IMR-90 (cell line): ENCODE measurements at regions of chr6 and their contacts with region 1.

Region 1: GRCh38 chr6:27893059-27893835 is 18.9 kb downstream of the OR2B2 start:
- DNase-seq: peak; percentile 99
- ATAC-seq: peak; percentile 64
- H3K4me3 ChIP-seq: peak overlapping the region; percentile 67
- H3K27ac ChIP-seq: peak overlapping the region; percentile 48
- H3K4me1 ChIP-seq: peaks cover 5% of the 10 kb centered on the region
- H3K27me3 ChIP-seq: no peaks in the 10 kb centered on the region
- CTCF ChIP-seq: no peak
- POLR2A ChIP-seq: peak; percentile 99
- RAD21 ChIP-seq: no peak

Region 2: DNA sequence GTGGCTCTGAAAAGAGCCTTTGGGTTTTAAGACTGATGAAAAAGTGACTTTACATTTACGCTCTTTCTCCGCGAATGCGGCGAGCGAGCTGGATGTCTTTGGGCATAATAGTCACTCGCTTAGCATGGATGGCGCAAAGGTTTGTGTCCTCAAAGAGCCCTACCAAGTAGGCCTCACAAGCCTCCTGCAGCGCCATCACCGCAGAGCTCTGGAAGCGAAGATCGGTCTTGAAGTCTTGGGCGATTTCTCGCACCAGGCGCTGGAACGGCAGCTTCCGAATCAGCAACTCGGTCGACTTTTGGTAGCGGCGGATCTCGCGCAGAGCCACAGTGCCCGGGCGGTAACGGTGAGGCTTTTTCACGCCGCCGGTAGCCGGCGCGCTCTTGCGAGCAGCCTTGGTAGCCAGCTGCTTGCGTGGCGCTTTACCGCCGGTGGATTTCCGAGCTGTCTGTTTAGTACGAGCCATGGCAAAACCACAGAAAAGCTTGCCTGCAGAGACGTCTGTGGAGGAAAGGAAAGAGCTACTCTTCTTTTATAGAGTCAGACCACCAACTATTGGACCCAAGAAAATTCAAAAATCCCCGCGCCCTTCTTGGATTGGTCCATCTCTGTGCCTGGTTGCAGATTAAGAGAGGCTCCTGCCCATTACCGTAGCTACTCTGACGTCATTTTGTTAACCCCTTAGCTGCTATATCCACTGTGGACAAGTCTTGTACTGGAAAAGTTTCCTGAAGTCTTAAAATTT is 1861.5 kb before region 1 on chr6:
- CTCF ChIA-PET with region 1: no interaction called
- POLR2A ChIA-PET with region 1: interaction called, 6 read pairs
- dilution Hi-C with region 1: no loop called
- in situ Hi-C with region 1: no loop called
- intact Hi-C with region 1: loop called (anchors 1 kb)
- DNase-seq: peak; percentile 97
- ATAC-seq: peak; percentile 72
- H3K4me3 ChIP-seq: peak overlapping the region; percentile 73
- H3K27ac ChIP-seq: peak overlapping the region; percentile 27
- H3K4me1 ChIP-seq: no peaks in the 10 kb centered on the region
- H3K27me3 ChIP-seq: no peaks in the 10 kb centered on the region
- CTCF ChIP-seq: peak; percentile 15; the same call in 1 of the 2 replicates
- POLR2A ChIP-seq: peak; percentile 98
- RAD21 ChIP-seq: no peak

Region 3: GRCh38 chr6:27157459-27158315 is 735.6 kb before region 1 on chr6:
- CTCF ChIA-PET with region 1: no interaction called
- POLR2A ChIA-PET with region 1: no interaction called
- dilution Hi-C with region 1: no loop called
- in situ Hi-C with region 1: no loop called
- intact Hi-C with region 1: loop called (anchors 5 kb)
- DNase-seq: peak; percentile 77
- ATAC-seq: peak; percentile 86
- H3K4me3 ChIP-seq: peak overlapping the region; percentile 49
- H3K27ac ChIP-seq: no peak overlapping the region
- H3K4me1 ChIP-seq: no peaks in the 10 kb centered on the region
- H3K27me3 ChIP-seq: no peaks in the 10 kb centered on the region
- CTCF ChIP-seq: peak; percentile 50
- POLR2A ChIP-seq: no peak
- RAD21 ChIP-seq: peak; percentile 38

Region 4: DNA sequence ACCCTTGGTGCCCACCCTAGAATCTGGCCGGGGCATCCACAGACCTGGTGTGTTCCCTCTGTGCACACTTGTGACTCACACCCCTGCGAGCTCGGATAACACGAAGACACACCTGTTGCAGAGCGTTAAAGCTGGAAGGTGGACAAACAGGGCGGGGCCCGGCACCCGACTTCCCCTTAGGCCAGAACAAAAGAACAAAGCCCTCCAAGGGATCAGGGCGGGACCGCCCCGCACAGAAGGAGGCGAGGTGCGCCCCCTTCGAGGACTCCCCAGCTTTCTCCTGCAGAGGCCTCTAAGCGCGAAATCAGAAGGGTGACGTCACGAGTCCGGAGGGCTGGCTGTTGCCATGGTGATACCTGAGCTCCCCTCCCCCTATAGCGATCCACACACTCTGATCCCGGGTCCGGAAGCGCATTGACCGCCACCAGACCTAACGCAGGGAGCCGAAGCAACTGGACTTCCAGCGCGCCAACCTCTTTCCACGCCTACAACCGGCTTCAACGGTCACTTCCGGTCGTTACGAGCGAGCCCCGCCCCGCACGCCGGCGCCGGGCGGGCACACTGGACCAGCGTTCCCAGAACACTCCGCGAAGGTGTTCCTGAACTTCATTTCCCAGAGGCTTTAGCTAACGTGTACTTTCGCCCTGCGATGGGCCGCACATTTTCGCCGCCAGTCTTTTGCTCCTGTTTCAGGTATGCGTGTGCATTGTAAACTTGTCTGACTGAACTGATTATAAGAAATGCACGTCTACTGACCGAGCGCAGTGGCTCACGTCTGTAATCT is 420.4 kb before region 1 on chr6 and contains the start of gene ZNF184:
- CTCF ChIA-PET with region 1: no interaction called
- POLR2A ChIA-PET with region 1: no interaction called
- dilution Hi-C with region 1: no loop called
- in situ Hi-C with region 1: loop called (anchors 10 kb)
- intact Hi-C with region 1: no loop called
- DNase-seq: peak; percentile 98
- ATAC-seq: peak; percentile 96
- H3K4me3 ChIP-seq: peak within 1 kb of the TSS; percentile 60
- H3K27ac ChIP-seq: peak within 1 kb of the TSS; percentile 74
- H3K4me1 ChIP-seq: no peaks in the 10 kb centered on the region
- H3K27me3 ChIP-seq: no peaks in the 10 kb centered on the region
- CTCF ChIP-seq: no peak; the same call in 1 of the 2 replicates
- POLR2A ChIP-seq: peak; percentile 82
- RAD21 ChIP-seq: no peak
- total RNA-seq, gene ZNF184: 8.1 and 10.6 TPM in 2 replicates

Region 5: GRCh38 chr6:27772261-27773001 is 120.8 kb before region 1 on chr6:
- CTCF ChIA-PET with region 1: interaction called, 19 read pairs
- POLR2A ChIA-PET with region 1: interaction called, 3 read pairs
- dilution Hi-C with region 1: no loop called
- in situ Hi-C with region 1: no loop called
- intact Hi-C with region 1: loop called (anchors 1 kb)
- DNase-seq: peak; percentile 77
- ATAC-seq: peak; percentile 100
- H3K4me3 ChIP-seq: no peak overlapping the region
- H3K27ac ChIP-seq: no peak overlapping the region
- H3K4me1 ChIP-seq: no peaks in the 10 kb centered on the region
- H3K27me3 ChIP-seq: peaks cover 4% of the 10 kb centered on the region; the same call in 1 of the 2 replicates
- CTCF ChIP-seq: peak; percentile 91
- POLR2A ChIP-seq: no peak
- RAD21 ChIP-seq: peak; percentile 72

Region 6: GRCh38 chr6:27864906-27865849 is 28.1 kb before region 1 on chr6:
- CTCF ChIA-PET with region 1: no interaction called
- POLR2A ChIA-PET with region 1: interaction called, 10 read pairs
- dilution Hi-C with region 1: no loop called
- in situ Hi-C with region 1: no loop called
- intact Hi-C with region 1: no loop called
- DNase-seq: peak; percentile 99
- ATAC-seq: peak; percentile 75
- H3K4me3 ChIP-seq: peak overlapping the region; percentile 76
- H3K27ac ChIP-seq: peak overlapping the region; percentile 77
- H3K4me1 ChIP-seq: peaks cover 9% of the 10 kb centered on the region
- H3K27me3 ChIP-seq: no peaks in the 10 kb centered on the region
- CTCF ChIP-seq: no peak
- POLR2A ChIP-seq: peak; percentile 94
- RAD21 ChIP-seq: no peak